Spleen (tissue), 13 donors: ENCODE measurements at regions of chr10 and their contacts with region 1.

Region 1: GRCh38 chr10:87845624-87846570 is 17.4 kb downstream of the KLLN start:
- DNase-seq: no peak
- H3K4me3 ChIP-seq: no peak overlapping the region
- H3K27ac ChIP-seq: no peak overlapping the region
- H3K4me1 ChIP-seq: peaks cover 0 to 6% (median under 1%) of the 10 kb centered on the region in 6 donors
- H3K27me3 ChIP-seq: no peaks in the 10 kb centered on the region
- CTCF ChIP-seq: no peak
- POLR2A ChIP-seq: no peak

Region 2: DNA sequence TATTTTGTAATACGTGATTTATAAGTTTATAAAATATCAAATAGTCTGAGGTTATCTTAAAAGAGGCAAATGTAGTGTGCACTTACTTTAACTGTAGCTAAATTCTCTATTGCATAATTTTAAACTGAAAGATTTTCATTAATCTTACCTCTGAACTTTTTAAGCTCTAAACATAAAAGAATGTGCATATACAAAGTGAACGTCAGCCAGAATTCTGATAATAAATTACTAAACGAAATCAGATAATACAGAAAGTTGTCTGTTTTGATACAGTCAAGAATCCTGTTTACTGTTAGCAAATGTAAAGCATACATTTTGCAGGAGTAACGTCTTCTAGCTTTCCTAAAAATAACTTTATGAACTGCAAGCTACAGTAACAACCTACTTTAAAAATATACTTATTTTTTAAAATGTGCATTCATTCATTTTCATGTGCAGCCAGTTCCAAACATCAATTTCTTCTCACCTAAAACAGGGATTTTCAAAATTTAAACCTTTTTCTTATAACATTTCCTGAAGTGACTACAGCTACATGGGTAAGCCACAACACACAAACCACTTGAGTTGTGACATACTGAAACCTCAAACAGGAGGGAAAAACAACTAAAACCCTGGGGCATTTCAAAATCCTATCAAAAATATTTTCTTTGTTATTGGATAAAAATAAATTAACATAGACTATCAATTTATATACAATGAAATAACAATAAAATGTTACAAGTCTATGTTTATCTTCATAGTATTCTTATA is 644.5 kb after region 1 on chr10:
- intact Hi-C with region 1: no loop called
- DNase-seq: no peak
- H3K4me3 ChIP-seq: no peak overlapping the region
- H3K27ac ChIP-seq: no peak overlapping the region
- H3K4me1 ChIP-seq: peaks cover 0 to 21% (median 3%) of the 10 kb centered on the region in 6 donors
- H3K27me3 ChIP-seq: no peaks in the 10 kb centered on the region
- CTCF ChIP-seq: no peak
- POLR2A ChIP-seq: no peak

Region 3: DNA sequence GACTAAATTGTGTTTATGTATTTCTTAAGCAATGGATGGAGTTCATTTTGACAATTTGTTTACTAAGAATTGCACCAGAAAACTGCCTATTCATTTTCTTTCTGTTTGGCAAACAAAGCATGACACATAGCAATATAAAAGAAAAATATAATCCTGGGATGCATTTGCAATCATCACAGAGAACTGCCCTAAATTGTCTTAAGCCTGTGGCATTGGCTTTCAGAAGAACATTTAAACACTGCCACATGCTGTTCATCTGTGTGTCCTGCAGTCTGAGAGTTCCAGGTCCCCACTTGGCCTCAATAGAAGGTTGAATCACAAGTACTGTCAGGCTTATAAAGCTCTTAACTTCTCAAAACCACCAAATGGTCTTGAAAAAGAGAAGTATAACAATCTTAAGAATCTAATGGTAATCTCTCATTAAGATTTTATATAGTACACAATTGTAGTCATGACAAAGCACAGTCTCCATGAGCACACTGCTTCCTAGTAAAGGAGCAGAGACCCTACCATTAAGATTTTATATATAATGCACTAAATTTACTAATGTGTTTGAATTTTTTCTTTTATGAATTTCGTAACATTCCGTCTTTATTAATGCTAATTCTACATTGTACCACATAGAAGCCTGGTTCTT is 707.3 kb after region 1 on chr10:
- intact Hi-C with region 1: loop called (anchors 5 kb)
- DNase-seq: no peak
- H3K4me3 ChIP-seq: no peak overlapping the region
- H3K27ac ChIP-seq: no peak overlapping the region
- H3K4me1 ChIP-seq: peaks cover 0 to 7% (median 2%) of the 10 kb centered on the region in 6 donors
- H3K27me3 ChIP-seq: no peaks in the 10 kb centered on the region
- CTCF ChIP-seq: peak; percentile 56 to 88 (median 77)
- POLR2A ChIP-seq: no peak